ENCODE measurements at regions of chr1 and their contacts with region 1.

Region 1: GRCh38 chr1:163528710-163529348 is 207.1 kb downstream of the NUF2 start:
- DNase-seq: peak in 3 of 5 donors; percentile 15 to 30 (median 19)
- H3K4me3 ChIP-seq: no peak overlapping the region
- H3K27ac ChIP-seq: no peak overlapping the region
- H3K4me1 ChIP-seq: no peaks in the 10 kb centered on the region
- H3K27me3 ChIP-seq: no peaks in the 10 kb centered on the region
- CTCF ChIP-seq: peak in 2 of 3 donors; percentile 45 to 64
- EP300 ChIP-seq: no peak
- POLR2A ChIP-seq: no peak

Region 2: GRCh38 chr1:163610486-163610885 is 81.7 kb after region 1 on chr1:
- intact Hi-C with region 1: no loop called
- DNase-seq: no peak
- H3K4me3 ChIP-seq: no peak overlapping the region
- H3K27ac ChIP-seq: no peak overlapping the region
- H3K4me1 ChIP-seq: peaks cover 2% of the 10 kb centered on the region
- H3K27me3 ChIP-seq: no peaks in the 10 kb centered on the region
- CTCF ChIP-seq: no peak
- EP300 ChIP-seq: no peak
- POLR2A ChIP-seq: no peak

Region 3: GRCh38 chr1:165073185-165074007 is 1544.6 kb after region 1 on chr1:
- intact Hi-C with region 1: loop called in 1 of 4 experiments (anchors 10 kb)
- DNase-seq: no peak
- H3K4me3 ChIP-seq: no peak overlapping the region
- H3K27ac ChIP-seq: no peak overlapping the region
- H3K4me1 ChIP-seq: no peaks in the 10 kb centered on the region
- H3K27me3 ChIP-seq: no peaks in the 10 kb centered on the region
- CTCF ChIP-seq: peak; percentile 53 to 64 (median 59)
- EP300 ChIP-seq: no peak
- POLR2A ChIP-seq: no peak